PC-3 (cell line): ENCODE measurements at regions of chr7 and their contacts with region 1.

Region 1: DNA sequence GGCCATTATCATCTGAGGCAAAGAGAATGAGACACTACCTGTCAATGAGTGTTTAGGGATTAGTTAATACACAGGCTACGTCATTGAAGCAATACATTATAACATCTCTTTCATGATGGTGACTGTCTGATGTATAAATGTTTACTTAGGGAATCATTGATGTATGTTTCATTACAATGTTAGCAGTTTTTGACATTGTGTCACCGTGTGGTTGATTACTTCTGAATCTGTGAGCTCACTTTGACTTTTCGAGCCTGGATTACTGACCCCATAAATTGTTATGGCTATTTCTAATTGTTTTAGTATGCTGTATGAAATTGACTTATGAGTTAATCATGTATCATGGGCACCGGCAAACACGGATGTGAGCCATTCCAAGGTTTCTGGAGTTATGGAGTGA is 494.0 kb downstream of the MAGI2 start:
- DNase-seq: peak; percentile 92
- ATAC-seq: peak; percentile 87
- H3K4me3 ChIP-seq: no peak overlapping the region
- H3K27ac ChIP-seq: peak overlapping the region; percentile 86
- H3K4me1 ChIP-seq: peaks cover 38% of the 10 kb centered on the region
- H3K27me3 ChIP-seq: no peaks in the 10 kb centered on the region
- CTCF ChIP-seq: no peak

Region 2: GRCh38 chr7:79008786-79009185 is 49.3 kb after region 1 on chr7:
- CTCF ChIA-PET with region 1: no interaction called
- POLR2A ChIA-PET with region 1: no interaction called
- intact Hi-C with region 1: loop called (anchors 5 kb)
- DNase-seq: no peak
- ATAC-seq: no peak
- H3K4me3 ChIP-seq: no peak overlapping the region
- H3K27ac ChIP-seq: no peak overlapping the region
- H3K4me1 ChIP-seq: no peaks in the 10 kb centered on the region
- H3K27me3 ChIP-seq: no peaks in the 10 kb centered on the region
- CTCF ChIP-seq: no peak

Region 3: DNA sequence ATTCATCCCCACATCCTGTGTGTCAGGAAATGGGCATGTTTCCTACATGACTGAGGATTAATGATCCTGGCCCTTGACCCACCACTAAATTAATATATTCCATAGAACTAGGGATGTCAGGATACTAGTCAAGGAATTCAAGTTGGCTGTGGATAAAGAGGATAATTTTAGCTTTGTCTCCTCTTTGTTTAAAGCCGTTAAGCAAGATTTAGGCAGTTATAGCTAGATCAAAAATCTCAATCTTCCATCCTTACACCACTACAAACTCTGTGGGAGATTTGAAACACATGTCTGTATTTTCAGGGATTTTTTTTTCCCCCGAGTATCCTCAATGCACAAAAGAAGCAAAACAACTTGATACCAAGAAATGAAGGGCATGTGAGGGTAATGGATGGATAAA is 76.9 kb after region 1 on chr7:
- CTCF ChIA-PET with region 1: no interaction called
- POLR2A ChIA-PET with region 1: no interaction called
- intact Hi-C with region 1: no loop called
- DNase-seq: no peak
- ATAC-seq: no peak
- H3K4me3 ChIP-seq: no peak overlapping the region
- H3K27ac ChIP-seq: no peak overlapping the region
- H3K4me1 ChIP-seq: no peaks in the 10 kb centered on the region; the same call in 1 of the 2 replicates
- H3K27me3 ChIP-seq: no peaks in the 10 kb centered on the region
- CTCF ChIP-seq: no peak

Region 4: GRCh38 chr7:79084423-79084822 is 124.9 kb after region 1 on chr7:
- CTCF ChIA-PET with region 1: interaction called, 3 read pairs
- POLR2A ChIA-PET with region 1: no interaction called
- intact Hi-C with region 1: loop called (anchors 1 kb)
- DNase-seq: peak; percentile 54
- ATAC-seq: peak; percentile 89
- H3K4me3 ChIP-seq: no peak overlapping the region
- H3K27ac ChIP-seq: no peak overlapping the region
- H3K4me1 ChIP-seq: peaks cover 12% of the 10 kb centered on the region
- H3K27me3 ChIP-seq: no peaks in the 10 kb centered on the region
- CTCF ChIP-seq: no peak

Region 5: DNA sequence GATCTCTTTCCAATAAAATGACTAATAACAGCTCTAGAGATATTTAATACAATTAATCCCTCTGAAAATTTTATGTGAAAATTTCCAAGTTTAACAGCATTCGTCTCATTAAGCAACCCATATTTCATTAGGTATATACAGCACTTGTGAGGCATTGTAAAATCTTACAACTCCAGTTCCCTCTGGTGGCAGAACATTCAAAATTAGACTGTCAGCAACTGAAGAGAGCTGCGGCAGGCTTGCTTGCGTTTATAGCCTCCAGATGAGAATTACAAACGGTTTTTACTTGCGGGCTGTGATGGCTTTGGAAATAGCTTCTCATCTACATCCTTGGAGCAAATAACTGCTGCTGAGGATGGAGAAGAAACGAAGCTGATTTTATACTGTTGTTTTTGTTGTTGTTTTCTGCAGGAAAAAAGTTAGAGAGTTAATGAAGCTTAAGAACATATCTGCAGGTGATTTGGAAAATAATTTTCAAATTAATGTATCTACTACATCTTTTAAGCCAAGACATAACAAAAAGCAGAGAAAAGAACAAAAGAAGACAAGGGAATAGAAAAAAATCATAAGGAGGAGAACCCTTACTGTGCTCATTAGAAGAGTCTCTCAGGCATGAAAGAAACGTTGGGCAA is 322.7 kb after region 1 on chr7:
- CTCF ChIA-PET with region 1: no interaction called
- POLR2A ChIA-PET with region 1: no interaction called
- intact Hi-C with region 1: no loop called
- DNase-seq: peak; percentile 71
- ATAC-seq: peak; percentile 70
- H3K4me3 ChIP-seq: peak overlapping the region; percentile 10
- H3K27ac ChIP-seq: peak overlapping the region; percentile 67
- H3K4me1 ChIP-seq: peaks cover 45% of the 10 kb centered on the region
- H3K27me3 ChIP-seq: no peaks in the 10 kb centered on the region
- CTCF ChIP-seq: peak; percentile 62